Activated naive CD4-positive, alpha-beta T cell treated with anti-CD3 and anti-CD28 coated beads for 36 hours (primary cell): ENCODE measurements at regions of chr5 and their contacts with region 1.

Region 1: DNA sequence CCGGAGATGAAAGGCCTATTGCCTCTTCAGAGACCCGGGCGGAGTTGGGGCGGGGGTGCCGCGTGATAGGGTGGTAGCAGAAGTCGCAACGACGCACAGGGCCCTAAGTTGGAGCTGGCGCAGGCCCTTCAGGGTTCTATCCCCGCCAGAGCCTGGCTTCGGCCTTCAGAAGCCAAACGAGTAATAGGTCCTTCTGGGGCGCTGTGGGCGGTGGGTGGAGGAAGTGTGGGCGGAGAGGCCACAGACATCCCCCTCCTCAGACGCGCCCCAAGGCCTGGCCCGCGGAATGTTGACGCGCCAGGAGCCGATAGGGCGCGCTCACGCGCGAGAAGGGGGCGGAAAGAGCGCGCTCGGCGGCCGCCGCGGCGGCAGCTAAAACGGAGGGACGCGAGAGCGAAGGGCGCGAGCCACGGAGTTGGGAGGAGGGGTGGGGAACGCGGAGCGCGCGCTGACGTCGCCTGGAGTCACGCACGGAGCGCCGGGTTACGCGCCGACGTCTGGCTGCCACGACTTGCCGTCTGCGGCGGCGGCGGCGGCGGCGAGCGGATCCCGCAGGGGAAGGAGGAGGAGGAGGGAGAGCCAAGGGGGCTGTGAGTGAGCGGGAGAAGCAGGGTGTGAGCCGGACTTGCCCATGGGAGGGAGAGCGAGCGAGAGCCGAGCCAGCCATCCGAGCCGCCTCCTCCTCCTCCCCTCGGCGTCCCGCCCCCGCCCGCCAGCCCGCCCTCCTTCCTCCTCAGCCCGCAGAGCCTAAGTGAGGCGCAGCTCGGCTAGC is 6.4 kb upstream of the PURA start:
- DNase-seq: peak; percentile 91
- H3K4me3 Mint-ChIP-seq: peak overlapping the region; percentile 98
- H3K27ac Mint-ChIP-seq: peak overlapping the region; percentile 91
- H3K4me1 Mint-ChIP-seq: peaks cover 39% of the 10 kb centered on the region
- H3K27me3 Mint-ChIP-seq: no peaks in the 10 kb centered on the region

Region 2: GRCh38 chr5:138752951-138753793 is 1354.3 kb before region 1 on chr5 and contains the start of gene CTNNA1:
- CTCF ChIA-PET with region 1: no interaction called
- intact Hi-C with region 1: loop called (anchors 5 kb)
- DNase-seq: peak; percentile 48
- H3K4me3 Mint-ChIP-seq: peak within 1 kb of the TSS; percentile 74
- H3K27ac Mint-ChIP-seq: peak within 1 kb of the TSS; percentile 32
- H3K4me1 Mint-ChIP-seq: peaks cover 19% of the 10 kb centered on the region
- H3K27me3 Mint-ChIP-seq: peaks cover 48% of the 10 kb centered on the region
- total RNA-seq, gene CTNNA1: 36.8 to 43.0 TPM

Region 3: DNA sequence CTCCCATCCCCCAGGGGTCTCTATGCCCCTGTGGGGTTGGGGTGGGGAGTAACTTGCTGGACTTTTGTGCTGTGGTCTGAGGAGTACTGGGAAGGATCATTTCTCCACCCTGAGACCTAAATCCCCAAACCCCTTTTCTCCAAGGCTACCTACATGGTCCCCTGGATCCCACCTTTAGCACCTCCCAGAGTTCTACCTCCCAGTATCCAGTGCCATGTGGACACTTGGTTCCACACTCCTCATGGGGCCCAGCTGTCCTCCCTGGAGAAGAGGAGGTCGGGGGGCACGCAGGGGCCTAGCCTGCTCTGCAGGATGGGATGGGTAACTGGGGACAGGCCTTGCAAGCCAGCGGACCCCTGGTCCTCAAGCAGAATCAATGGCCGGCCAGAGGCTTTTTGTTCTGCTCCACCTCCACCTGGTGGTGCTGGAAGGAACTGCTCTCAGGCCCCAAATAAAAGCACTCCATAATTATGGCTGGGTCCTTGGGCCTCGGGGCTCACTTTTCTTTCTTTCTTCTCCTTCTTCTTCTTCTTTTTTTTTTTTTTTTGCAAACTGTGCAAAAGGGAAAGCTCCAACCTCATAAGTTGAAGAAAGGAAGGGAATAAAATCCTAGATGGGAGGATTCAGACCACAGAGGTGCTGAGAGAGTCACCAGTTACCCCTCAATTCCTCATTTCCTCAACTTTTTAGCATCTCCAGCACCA is 243.5 kb before region 1 on chr5:
- CTCF ChIA-PET with region 1: no interaction called
- intact Hi-C with region 1: no loop called
- DNase-seq: peak; percentile 69
- H3K4me3 Mint-ChIP-seq: no peak overlapping the region
- H3K27ac Mint-ChIP-seq: no peak overlapping the region
- H3K4me1 Mint-ChIP-seq: no peaks in the 10 kb centered on the region
- H3K27me3 Mint-ChIP-seq: no peaks in the 10 kb centered on the region

Region 4: DNA sequence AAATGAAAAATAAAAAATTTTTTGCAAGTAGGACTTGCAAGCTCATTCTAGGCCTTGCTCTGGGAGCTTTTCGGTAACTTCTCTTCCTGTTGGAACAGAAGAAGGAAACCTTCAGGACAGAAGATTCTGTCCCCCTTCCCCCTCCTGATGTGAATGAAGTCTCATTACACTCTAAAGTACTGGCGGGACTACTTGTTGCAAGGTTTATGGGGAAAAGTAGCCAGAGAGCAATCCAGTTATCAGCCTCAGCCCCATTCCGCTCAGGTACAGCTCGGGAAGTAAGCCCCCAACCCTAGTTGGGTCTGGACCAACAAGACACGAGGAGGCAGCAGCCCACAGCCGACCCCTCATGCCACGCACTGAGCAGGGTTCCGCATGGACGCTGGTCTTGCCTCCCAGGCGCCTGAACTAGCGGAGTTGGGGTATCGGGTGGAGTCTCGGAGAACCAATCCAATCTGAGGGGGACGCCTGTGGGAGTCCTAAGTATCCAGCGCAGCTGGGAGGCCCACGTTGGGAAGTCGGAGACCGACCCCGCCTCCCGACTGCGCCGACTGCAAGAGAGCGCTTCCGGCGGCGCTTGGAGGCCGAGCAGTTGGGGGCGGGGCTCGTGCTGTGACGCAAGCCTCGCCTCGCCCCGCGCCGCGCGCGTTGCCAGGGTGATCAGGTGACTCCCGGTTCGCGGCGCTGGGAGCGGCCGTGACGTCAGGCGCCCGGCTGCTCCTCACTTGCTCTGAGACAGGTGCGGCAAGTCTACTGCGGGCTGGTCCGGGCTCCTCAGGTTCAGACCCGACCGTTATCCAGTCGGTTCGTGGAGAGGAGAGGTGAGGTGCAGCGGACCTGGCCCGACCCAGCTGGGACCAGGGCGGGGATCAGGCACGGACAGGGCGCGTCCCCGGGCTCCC is 67.2 kb after region 1 on chr5 and contains the start of gene CYSTM1:
- CTCF ChIA-PET with region 1: no interaction called
- intact Hi-C with region 1: loop called (anchors 1 kb)
- DNase-seq: peak; percentile 97
- H3K4me3 Mint-ChIP-seq: peak within 1 kb of the TSS; percentile 92
- H3K27ac Mint-ChIP-seq: peak within 1 kb of the TSS; percentile 66
- H3K4me1 Mint-ChIP-seq: peaks cover 12% of the 10 kb centered on the region
- H3K27me3 Mint-ChIP-seq: peaks cover 2% of the 10 kb centered on the region
- total RNA-seq, gene CYSTM1: 22.3 to 25.1 TPM